ENCODE measurements at regions of chr9 and their contacts with region 1.

Region 1: DNA sequence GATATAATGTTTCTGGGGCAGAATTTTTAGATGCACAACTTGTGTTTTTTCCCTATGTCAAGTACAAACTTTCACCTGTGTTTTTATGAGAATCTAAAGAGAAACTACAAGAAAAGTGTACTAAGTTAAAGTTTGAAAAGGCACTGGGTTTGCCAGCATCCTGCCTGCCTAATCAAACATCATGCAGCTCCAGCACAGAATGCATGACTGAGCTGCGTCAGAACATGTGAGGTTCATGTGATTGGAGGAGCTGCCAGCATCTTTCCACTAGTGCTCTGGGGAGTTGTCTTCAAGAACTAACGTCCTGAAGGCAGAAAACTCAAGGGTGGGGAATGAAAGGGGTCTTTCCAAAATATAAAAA is 46.1 kb upstream of the RIC1 start:
- DNase-seq: peak in 9 of 10 donors; percentile 2 to 71 (median 41)
- ATAC-seq: peak; percentile 77 to 90
- H3K4me3 Mint-ChIP-seq: peak overlapping the region in 4 of 10 donors; percentile 13 to 46 (median 38)
- H3K27ac Mint-ChIP-seq: peak overlapping the region in 9 of 10 donors; percentile 40 to 89 (median 85)
- H3K4me1 Mint-ChIP-seq: peaks cover 23 to 49% (median 38%) of the 10 kb centered on the region in 4 donors
- H3K27me3 Mint-ChIP-seq: no peaks in the 10 kb centered on the region

Region 2: GRCh38 chr9:5437254-5438216 is 145.3 kb before region 1 on chr9 and contains the start of gene PLGRKT:
- POLR2A ChIA-PET with region 1: interaction called, 11 read pairs
- DNase-seq: peak; percentile 74 to 94 (median 88)
- ATAC-seq: peak; percentile 95 to 96
- H3K4me3 Mint-ChIP-seq: peak within 1 kb of the TSS; percentile 83 to 98 (median 95)
- H3K27ac Mint-ChIP-seq: peak within 1 kb of the TSS; percentile 94 to 100 (median 98)
- H3K4me1 Mint-ChIP-seq: peaks cover 17 to 39% (median 35%) of the 10 kb centered on the region in 4 donors
- H3K27me3 Mint-ChIP-seq: no peaks in the 10 kb centered on the region
- polyA plus RNA-seq, gene PLGRKT: 45.2 to 60.3 (median 55.8) TPM

Region 3: DNA sequence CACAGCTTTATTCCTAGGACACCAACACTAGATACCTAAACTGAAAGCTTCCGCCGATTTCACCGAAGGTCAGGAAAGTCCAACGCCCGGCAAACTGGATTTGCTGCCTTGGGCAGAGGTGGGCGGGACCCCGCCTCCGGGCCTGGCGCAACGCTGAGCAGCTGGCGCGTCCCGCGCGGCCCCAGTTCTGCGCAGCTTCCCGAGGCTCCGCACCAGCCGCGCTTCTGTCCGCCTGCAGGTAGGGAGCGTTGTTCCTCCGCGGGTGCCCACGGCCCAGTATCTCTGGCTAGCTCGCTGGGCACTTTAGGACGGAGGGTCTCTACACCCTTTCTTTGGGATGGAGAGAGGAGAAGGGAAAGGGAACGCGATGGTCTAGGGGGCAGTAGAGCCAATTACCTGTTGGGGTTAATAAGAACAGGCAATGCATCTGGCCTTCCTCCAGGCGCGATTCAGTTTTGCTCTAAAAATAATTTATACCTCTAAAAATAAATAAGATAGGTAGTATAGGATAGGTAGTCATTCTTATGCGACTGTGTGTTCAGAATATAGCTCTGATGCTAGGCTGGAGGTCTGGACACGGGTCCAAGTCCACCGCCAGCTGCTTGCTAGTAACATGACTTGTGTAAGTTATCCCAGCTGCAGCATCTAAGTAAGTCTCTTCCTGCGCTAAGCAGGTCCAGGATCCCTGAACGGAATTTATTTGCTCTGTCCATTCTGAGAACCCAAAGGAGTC is 132.3 kb before region 1 on chr9 and contains the start of gene CD274:
- POLR2A ChIA-PET with region 1: interaction called, 46 read pairs
- DNase-seq: peak; percentile 64 to 85 (median 71)
- ATAC-seq: peak; percentile 97
- H3K4me3 Mint-ChIP-seq: peak within 1 kb of the TSS; percentile 93 to 96 (median 94)
- H3K27ac Mint-ChIP-seq: peak within 1 kb of the TSS; percentile 93 to 100 (median 97)
- H3K4me1 Mint-ChIP-seq: peaks cover 17 to 69% (median 32%) of the 10 kb centered on the region in 4 donors
- H3K27me3 Mint-ChIP-seq: no peaks in the 10 kb centered on the region
- polyA plus RNA-seq, gene CD274: 1.1 to 3.9 (median 1.6) TPM

Region 4: GRCh38 chr9:5557606-5558587 is 24.9 kb before region 1 on chr9:
- POLR2A ChIA-PET with region 1: interaction called, 24 read pairs
- DNase-seq: peak; percentile 10 to 70 (median 47)
- ATAC-seq: peak; percentile 99
- H3K4me3 Mint-ChIP-seq: peak overlapping the region; percentile 31 to 80 (median 66)
- H3K27ac Mint-ChIP-seq: peak overlapping the region; percentile 85 to 98 (median 92)
- H3K4me1 Mint-ChIP-seq: peaks cover 34 to 57% (median 47%) of the 10 kb centered on the region in 4 donors
- H3K27me3 Mint-ChIP-seq: peaks cover 0 to 2% (median 0%) of the 10 kb centered on the region in 5 donors